ENCODE measurements at regions of chr2 and their contacts with region 1.

Region 1: GRCh38 chr2:47127862-47128543 is 27.1 kb downstream of the STPG4 start:
- DNase-seq: no peak
- ATAC-seq: no peak
- H3K4me3 ChIP-seq: no peak overlapping the region
- H3K27ac ChIP-seq: no peak overlapping the region
- H3K4me1 ChIP-seq: no peaks in the 10 kb centered on the region
- H3K27me3 ChIP-seq: no peaks in the 10 kb centered on the region
- CTCF ChIP-seq: no peak
- POLR2A ChIP-seq: no peak
- RAD21 ChIP-seq: no peak

Region 2: GRCh38 chr2:47091118-47091517 is 36.9 kb before region 1 on chr2:
- CTCF ChIA-PET with region 1: no interaction called
- POLR2A ChIA-PET with region 1: no interaction called
- dilution Hi-C with region 1: no loop called
- in situ Hi-C with region 1: no loop called
- intact Hi-C with region 1: loop called (anchors 5 kb)
- DNase-seq: peak; percentile 74
- ATAC-seq: peak; percentile 59
- H3K4me3 ChIP-seq: no peak overlapping the region
- H3K27ac ChIP-seq: no peak overlapping the region
- H3K4me1 ChIP-seq: peaks cover 21% of the 10 kb centered on the region
- H3K27me3 ChIP-seq: no peaks in the 10 kb centered on the region
- CTCF ChIP-seq: no peak
- POLR2A ChIP-seq: no peak
- RAD21 ChIP-seq: no peak; the same call in 1 of the 2 replicates